ENCODE measurements at regions of chr18 and their contacts with region 1.

Region 1: DNA sequence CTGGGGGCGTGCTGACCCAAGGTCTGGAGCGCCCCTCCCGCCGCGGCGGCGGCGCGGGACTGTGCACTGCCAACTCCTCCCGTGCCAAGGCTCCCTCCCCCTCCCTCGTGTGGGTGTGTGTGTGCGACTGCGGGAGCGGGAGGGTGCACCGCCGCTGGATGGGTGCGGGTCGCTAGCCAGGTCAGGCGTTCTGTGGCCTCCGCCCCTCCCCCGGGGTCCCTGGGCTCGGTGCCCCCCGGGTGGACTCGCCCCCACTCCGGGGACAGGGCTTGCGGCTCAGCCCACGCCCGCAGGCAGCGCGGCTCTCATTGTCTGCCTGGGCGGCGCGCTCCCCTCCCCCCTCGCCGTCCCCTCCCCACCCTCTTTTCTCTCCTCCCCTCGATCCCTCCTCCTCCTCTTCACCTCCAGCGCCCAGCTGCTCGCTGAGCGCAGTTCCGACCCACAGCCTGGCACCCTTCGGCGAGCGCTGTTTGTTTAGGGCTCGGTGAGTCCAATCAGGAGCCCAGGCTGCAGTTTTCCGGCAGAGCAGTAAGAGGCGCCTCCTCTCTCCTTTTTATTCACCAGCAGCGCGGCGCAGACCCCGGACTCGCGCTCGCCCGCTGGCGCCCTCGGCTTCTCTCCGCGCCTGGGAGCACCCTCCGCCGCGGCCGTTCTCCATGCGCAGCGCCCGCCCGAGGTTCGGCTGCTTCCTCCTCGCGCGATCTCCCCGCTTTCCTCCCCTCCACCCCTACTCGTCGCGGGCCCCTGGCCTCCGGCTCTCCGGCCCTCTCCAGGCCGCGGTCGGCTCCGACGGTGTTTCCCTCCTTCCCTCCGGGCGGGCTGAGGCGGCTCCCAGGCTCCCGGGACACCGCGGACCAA is at the start of gene GATA6:
- DNase-seq: peak; percentile 85
- ATAC-seq: peak; percentile 84
- H3K4me3 ChIP-seq: peak within 1 kb of the TSS; percentile 72 to 84
- H3K27ac ChIP-seq: peak within 1 kb of the TSS; percentile 75
- H3K4me1 ChIP-seq: peaks cover 5 to 19% of the 10 kb centered on the region in 2 experiments; a peak in 2 of 4 replicates
- H3K27me3 ChIP-seq: peaks cover 8% of the 10 kb centered on the region; the same call in 1 of the 2 replicates
- CTCF ChIP-seq: peak; percentile 24 to 38 (median 36); a peak in 4 of 6 replicates
- POLR2A ChIP-seq: peak; percentile 38
- RAD21 ChIP-seq: peak; percentile 64
- total RNA-seq, gene GATA6: 3.3 TPM

Region 2: DNA sequence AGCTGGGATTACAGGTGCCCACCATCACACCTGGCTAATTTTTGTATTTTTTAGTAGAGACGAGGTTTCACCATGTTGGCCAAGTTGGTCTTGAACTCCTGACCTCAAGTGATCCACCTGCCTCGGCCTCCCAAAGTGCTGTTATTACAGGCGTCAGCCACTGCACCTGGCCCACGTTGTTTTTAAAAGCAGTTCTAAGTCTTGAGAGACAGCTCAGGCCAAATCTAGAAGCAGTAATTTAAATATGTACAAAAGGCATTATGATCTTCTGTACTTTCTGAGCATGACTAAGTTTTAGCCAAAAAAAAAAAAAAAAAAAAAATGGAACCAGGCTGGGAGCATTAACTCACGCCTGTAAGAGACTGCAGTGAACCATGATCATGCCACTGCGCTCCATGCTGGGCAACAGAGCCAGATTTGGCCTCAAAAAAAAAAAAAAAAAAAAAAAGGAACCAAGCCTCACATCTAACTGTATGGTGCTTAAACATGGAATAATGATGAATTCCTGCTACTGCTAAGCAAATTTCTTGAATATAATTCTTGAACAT is 468.6 kb before region 1 on chr18:
- CTCF ChIA-PET with region 1: no interaction called
- POLR2A ChIA-PET with region 1: no interaction called
- RAD21 ChIA-PET with region 1: no interaction called
- intact Hi-C with region 1: no loop called
- DNase-seq: no peak
- ATAC-seq: no peak
- H3K4me3 ChIP-seq: no peak overlapping the region
- H3K27ac ChIP-seq: no peak overlapping the region
- H3K4me1 ChIP-seq: peaks cover 11 to 16% of the 10 kb centered on the region in 2 experiments; a peak in 3 of 4 replicates
- H3K27me3 ChIP-seq: no peaks in the 10 kb centered on the region
- CTCF ChIP-seq: no peak
- POLR2A ChIP-seq: no peak
- RAD21 ChIP-seq: no peak

Region 3: DNA sequence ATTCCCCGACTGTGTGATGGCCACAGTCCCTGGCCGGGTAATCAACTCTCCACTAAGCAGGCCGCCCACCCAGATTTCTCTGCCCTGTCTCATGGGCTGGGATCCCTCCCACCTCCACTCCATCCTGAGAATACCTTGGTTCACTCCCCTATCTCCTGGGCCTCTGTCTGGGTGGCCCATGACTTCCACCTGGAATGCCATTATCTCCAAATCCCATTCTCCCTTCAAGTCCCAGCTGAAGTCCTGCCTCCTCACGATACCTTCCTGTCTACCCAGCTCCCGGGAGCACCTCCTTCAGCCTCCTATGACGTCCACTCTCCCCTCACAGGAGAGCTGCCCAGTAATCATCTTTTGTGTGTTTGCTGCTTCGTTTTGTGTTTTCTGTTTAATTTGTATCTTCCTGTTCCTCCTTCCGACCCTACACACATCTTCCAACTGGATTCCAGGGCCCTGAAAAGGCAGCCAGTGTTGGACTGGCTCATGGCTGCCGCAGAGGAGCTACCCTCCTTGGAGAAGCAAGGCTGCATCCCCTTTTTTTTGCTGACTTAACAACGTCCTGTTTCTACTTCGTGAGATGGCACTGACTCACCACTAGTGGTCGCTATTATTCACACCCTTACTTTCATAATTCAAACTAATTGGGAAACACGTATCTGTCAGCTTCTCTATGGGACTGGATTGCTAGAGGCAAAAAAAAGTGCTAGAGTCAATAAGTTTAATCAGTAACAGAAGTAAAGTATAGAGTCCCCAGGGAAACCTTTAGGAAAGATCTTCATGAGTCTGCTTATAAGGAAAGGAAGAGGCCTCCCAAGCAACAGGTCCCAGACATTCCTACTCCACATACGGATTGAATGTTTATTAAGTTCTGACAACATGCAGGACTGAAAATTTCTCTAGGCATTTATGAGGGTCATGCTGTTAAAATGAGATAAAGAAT is 171.8 kb before region 1 on chr18:
- CTCF ChIA-PET with region 1: interaction called, 3 read pairs
- POLR2A ChIA-PET with region 1: no interaction called
- RAD21 ChIA-PET with region 1: no interaction called
- intact Hi-C with region 1: loop called (anchors 5 kb)
- DNase-seq: peak; percentile 48
- ATAC-seq: peak; percentile 92
- H3K4me3 ChIP-seq: no peak overlapping the region
- H3K27ac ChIP-seq: no peak overlapping the region
- H3K4me1 ChIP-seq: no peaks in the 10 kb centered on the region
- H3K27me3 ChIP-seq: no peaks in the 10 kb centered on the region
- CTCF ChIP-seq: peak; percentile 36 to 93 (median 82); a peak in 5 of 6 replicates
- POLR2A ChIP-seq: no peak
- RAD21 ChIP-seq: peak; percentile 63

Region 4: DNA sequence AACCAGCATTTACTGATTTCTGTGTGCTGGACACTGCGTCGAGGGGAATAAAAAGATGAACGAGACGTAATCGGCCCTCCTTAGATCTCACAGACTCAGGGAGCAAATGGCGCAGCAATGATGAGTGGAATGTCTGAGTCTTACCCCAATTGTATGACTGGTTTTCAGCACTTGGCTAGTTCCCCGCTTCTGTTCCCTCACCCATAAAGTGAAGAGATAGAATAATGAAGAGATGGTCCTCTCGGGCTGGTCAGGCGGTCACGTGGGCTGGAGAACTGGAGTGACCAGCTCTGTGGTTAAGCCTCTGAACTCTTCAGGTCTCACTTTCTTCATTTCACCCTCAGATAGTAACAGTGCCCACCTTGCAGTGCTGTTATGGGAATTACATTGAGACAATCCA is 17.1 kb before region 1 on chr18:
- CTCF ChIA-PET with region 1: no interaction called
- POLR2A ChIA-PET with region 1: no interaction called
- RAD21 ChIA-PET with region 1: no interaction called
- intact Hi-C with region 1: no loop called
- DNase-seq: no peak
- ATAC-seq: no peak
- H3K4me3 ChIP-seq: no peak overlapping the region
- H3K27ac ChIP-seq: no peak overlapping the region
- H3K4me1 ChIP-seq: no peaks in the 10 kb centered on the region
- H3K27me3 ChIP-seq: 0 out of 2 replicates have a peak, but pooled peaks cover 4% of the 10 kb centered on the region
- CTCF ChIP-seq: no peak
- POLR2A ChIP-seq: no peak
- RAD21 ChIP-seq: no peak

Region 5: GRCh38 chr18:22370414-22370813 is 201.2 kb after region 1 on chr18:
- CTCF ChIA-PET with region 1: no interaction called
- POLR2A ChIA-PET with region 1: no interaction called
- RAD21 ChIA-PET with region 1: no interaction called
- intact Hi-C with region 1: no loop called
- DNase-seq: no peak
- ATAC-seq: no peak
- H3K4me3 ChIP-seq: no peak overlapping the region
- H3K27ac ChIP-seq: no peak overlapping the region
- H3K4me1 ChIP-seq: no peaks in the 10 kb centered on the region
- H3K27me3 ChIP-seq: no peaks in the 10 kb centered on the region
- CTCF ChIP-seq: no peak
- POLR2A ChIP-seq: no peak
- RAD21 ChIP-seq: no peak

Region 6: GRCh38 chr18:22703883-22704585 is 534.8 kb after region 1 on chr18:
- CTCF ChIA-PET with region 1: no interaction called
- POLR2A ChIA-PET with region 1: no interaction called
- RAD21 ChIA-PET with region 1: no interaction called
- intact Hi-C with region 1: loop called (anchors 10 kb)
- DNase-seq: peak; percentile 52
- ATAC-seq: peak; percentile 87
- H3K4me3 ChIP-seq: no peak overlapping the region
- H3K27ac ChIP-seq: no peak overlapping the region
- H3K4me1 ChIP-seq: peaks cover 0 to 6% of the 10 kb centered on the region in 2 experiments; a peak in 2 of 4 replicates
- H3K27me3 ChIP-seq: no peaks in the 10 kb centered on the region
- CTCF ChIP-seq: peak; percentile 53 to 85 (median 77); a peak in 5 of 6 replicates
- POLR2A ChIP-seq: no peak
- RAD21 ChIP-seq: peak; percentile 63

Measured in HCT116 (cell line).